ENCODE measurements at regions of chr3 and their contacts with region 1.

Region 1: DNA sequence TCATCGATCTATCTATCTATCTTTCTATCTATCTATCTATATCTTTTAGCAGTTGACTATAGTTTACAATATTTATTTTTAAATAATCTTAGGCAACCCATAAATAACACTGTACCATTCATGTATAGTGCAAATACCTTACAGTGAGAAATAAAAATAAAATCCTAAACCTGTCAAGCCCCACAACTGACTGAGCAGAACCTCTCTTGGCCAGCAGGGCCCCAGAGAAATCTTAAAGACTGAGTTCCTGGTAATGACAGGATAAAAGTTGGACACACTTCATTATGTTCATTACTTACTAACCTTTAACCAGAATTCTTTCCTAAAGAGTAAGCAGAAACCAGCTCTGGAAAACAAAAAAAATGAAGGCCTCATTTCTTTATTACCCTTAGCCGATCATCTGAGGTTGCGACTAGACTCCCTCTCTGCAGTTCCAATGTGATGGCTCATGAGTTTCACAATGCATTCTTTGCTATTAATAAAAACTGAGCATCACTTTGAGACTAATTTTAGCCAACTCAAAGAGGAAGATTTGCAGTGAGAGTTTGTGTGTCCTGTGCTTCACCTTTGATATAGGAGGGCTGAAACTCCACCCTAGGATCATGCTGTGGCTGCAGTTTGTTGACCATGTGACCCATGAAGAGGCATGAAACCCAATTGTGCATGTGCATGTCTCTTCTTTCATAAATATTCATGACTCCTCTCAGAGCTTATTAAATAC is 1072.0 kb downstream of the NSUN3 start:
- DNase-seq: no peak
- H3K4me3 ChIP-seq: no peak overlapping the region
- H3K27ac ChIP-seq: no peak overlapping the region
- H3K4me1 ChIP-seq: no peaks in the 10 kb centered on the region
- CTCF ChIP-seq: no peak

Region 2: DNA sequence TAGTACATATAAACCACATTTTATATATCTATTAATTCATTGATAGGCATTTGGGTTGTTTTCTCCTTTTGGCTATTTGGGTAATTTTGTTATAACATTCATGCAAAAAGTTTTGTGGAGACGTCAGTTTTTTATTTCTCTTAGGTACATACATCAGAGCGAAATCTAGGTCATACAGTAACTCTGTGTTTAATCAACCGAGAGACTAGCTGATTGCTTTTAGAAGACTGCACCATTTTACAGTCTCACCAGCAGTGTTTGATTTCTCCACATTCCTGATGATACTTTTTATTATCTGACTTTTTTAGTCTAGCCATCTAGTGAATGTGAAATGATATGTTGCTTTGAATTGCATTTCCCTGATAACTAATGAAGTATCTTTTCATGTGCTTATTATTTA is 52.7 kb before region 1 on chr3:
- CTCF ChIA-PET with region 1: no interaction called
- POLR2A ChIA-PET with region 1: no interaction called
- intact Hi-C with region 1: loop called (anchors 10 kb)
- DNase-seq: no peak
- H3K4me3 ChIP-seq: no peak overlapping the region
- H3K27ac ChIP-seq: no peak overlapping the region
- H3K4me1 ChIP-seq: no peaks in the 10 kb centered on the region
- CTCF ChIP-seq: no peak

Measured in OCI-LY7 (cell line).